Naive thymus-derived CD4-positive, alpha-beta T cell (primary cell): ENCODE measurements at regions of chr3 and their contacts with region 1.

Region 1: DNA sequence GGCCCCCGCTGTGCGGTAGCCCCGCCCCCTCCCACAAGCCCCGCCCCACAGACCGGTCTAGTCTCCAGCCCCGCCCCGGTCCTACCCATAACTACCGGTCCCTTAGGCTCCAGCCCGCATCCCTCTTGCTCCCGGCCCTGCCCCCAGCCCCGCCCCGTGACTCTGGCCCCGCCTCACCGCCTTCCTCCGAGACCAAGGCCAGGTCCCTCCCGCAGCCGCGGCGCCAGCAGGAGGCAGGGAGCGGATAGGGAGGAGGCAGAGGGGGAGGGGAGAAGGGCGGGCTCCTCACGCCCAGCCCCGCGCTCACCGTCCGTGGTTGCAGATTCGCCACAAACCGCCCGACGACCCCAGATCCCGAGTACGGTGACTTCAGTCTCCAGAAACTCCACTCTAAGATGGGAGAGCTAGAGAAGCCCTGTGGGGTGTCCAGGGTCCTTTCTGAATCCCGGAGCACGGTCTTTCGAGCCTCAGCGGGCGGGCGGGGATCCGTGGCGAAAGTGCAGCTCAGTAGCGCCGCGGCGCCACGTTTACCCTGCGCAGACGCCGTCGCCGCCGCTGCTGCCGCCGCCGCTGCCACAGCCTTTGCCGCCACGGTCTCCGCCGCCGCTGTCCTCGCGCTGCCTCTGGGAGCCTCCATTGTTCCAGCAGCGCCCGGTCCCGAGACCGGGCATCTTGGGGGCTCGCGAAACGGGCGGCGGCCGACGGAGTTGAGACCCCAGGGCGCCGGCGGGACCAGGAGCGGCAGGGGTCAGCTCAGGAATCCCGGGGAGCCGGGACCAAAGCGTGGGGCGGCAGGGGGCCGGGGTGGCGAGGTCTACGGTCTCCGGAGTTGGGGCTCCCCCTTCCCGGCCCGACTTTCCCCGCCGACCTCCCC is at the start of gene BRPF1:
- DNase-seq: peak; percentile 91 to 99 (median 98)
- ATAC-seq: peak; percentile 96
- H3K4me3 ChIP-seq: peak within 1 kb of the TSS; percentile 85
- H3K4me3 Mint-ChIP-seq: peak within 1 kb of the TSS; percentile 91 to 98 (median 93)
- H3K27ac ChIP-seq: peak within 1 kb of the TSS; percentile 88
- H3K27ac Mint-ChIP-seq: peak within 1 kb of the TSS; percentile 86 to 97 (median 95)
- H3K4me1 ChIP-seq: peaks cover 22 to 32% of the 10 kb centered on the region in 2 donors
- H3K4me1 Mint-ChIP-seq: peaks cover 49 to 77% (median 72%) of the 10 kb centered on the region in 7 donors
- H3K27me3 ChIP-seq: no peaks in the 10 kb centered on the region
- H3K27me3 Mint-ChIP-seq: no peaks in the 10 kb centered on the region
- total RNA-seq, gene BRPF1: 32.0 to 42.4 (median 39.5) TPM

Region 2: GRCh38 chr3:9396700-9397521 is 334.5 kb before region 1 on chr3:
- CTCF ChIA-PET with region 1: no interaction called
- POLR2A ChIA-PET with region 1: interaction called, 7 read pairs
- intact Hi-C with region 1: loop called (anchors 1 kb)
- DNase-seq: peak; percentile 98 to 100 (median 99)
- ATAC-seq: peak; percentile 82
- H3K4me3 ChIP-seq: peak overlapping the region; percentile 85
- H3K4me3 Mint-ChIP-seq: peak overlapping the region; percentile 89 to 100 (median 96)
- H3K27ac ChIP-seq: peak overlapping the region; percentile 82
- H3K27ac Mint-ChIP-seq: peak overlapping the region; percentile 90 to 100 (median 98)
- H3K4me1 ChIP-seq: peaks cover 46 to 55% of the 10 kb centered on the region in 2 donors
- H3K4me1 Mint-ChIP-seq: peaks cover 59 to 80% (median 75%) of the 10 kb centered on the region in 7 donors
- H3K27me3 ChIP-seq: no peaks in the 10 kb centered on the region
- H3K27me3 Mint-ChIP-seq: peaks cover 0 to 2% (median 0%) of the 10 kb centered on the region in 5 donors

Region 3: GRCh38 chr3:9718118-9718517 is 13.3 kb before region 1 on chr3:
- CTCF ChIA-PET with region 1: interaction called, 13 read pairs
- POLR2A ChIA-PET with region 1: interaction called, 5 read pairs
- intact Hi-C with region 1: loop called in 1 of 2 experiments (anchors 1 kb)
- DNase-seq: no peak
- ATAC-seq: no peak
- H3K4me3 ChIP-seq: no peak overlapping the region
- H3K4me3 Mint-ChIP-seq: peak overlapping the region in 1 of 10 donors; percentile 7
- H3K27ac ChIP-seq: no peak overlapping the region
- H3K27ac Mint-ChIP-seq: no peak overlapping the region
- H3K4me1 ChIP-seq: peaks cover 0 to 8% of the 10 kb centered on the region in 2 donors
- H3K4me1 Mint-ChIP-seq: peaks cover 0 to 18% (median 17%) of the 10 kb centered on the region in 7 donors
- H3K27me3 ChIP-seq: no peaks in the 10 kb centered on the region
- H3K27me3 Mint-ChIP-seq: peaks cover 0 to 19% (median 5%) of the 10 kb centered on the region in 5 donors

Region 4: GRCh38 chr3:9792405-9793160 is 61.1 kb after region 1 on chr3 and contains the starts of genes ARPC4 and TADA3:
- CTCF ChIA-PET with region 1: interaction called, 4 read pairs
- POLR2A ChIA-PET with region 1: interaction called, 15 read pairs
- intact Hi-C with region 1: loop called (anchors 1 kb)
- DNase-seq: peak; percentile 83 to 96 (median 93)
- ATAC-seq: peak; percentile 92
- H3K4me3 ChIP-seq: peak within 1 kb of the TSS; percentile 81
- H3K4me3 Mint-ChIP-seq: peak within 1 kb of the TSS; percentile 90 to 100 (median 98)
- H3K27ac ChIP-seq: peak within 1 kb of the TSS; percentile 98
- H3K27ac Mint-ChIP-seq: peak within 1 kb of the TSS; percentile 97 to 100 (median 99)
- H3K4me1 ChIP-seq: peaks cover 47% of the 10 kb centered on the region in 2 donors
- H3K4me1 Mint-ChIP-seq: peaks cover 45 to 75% (median 63%) of the 10 kb centered on the region in 7 donors
- H3K27me3 ChIP-seq: no peaks in the 10 kb centered on the region
- H3K27me3 Mint-ChIP-seq: no peaks in the 10 kb centered on the region
- total RNA-seq, gene ARPC4: 128 to 273 (median 129) TPM
- total RNA-seq, gene TADA3: 31.6 to 67.4 (median 36.8) TPM

Region 5: DNA sequence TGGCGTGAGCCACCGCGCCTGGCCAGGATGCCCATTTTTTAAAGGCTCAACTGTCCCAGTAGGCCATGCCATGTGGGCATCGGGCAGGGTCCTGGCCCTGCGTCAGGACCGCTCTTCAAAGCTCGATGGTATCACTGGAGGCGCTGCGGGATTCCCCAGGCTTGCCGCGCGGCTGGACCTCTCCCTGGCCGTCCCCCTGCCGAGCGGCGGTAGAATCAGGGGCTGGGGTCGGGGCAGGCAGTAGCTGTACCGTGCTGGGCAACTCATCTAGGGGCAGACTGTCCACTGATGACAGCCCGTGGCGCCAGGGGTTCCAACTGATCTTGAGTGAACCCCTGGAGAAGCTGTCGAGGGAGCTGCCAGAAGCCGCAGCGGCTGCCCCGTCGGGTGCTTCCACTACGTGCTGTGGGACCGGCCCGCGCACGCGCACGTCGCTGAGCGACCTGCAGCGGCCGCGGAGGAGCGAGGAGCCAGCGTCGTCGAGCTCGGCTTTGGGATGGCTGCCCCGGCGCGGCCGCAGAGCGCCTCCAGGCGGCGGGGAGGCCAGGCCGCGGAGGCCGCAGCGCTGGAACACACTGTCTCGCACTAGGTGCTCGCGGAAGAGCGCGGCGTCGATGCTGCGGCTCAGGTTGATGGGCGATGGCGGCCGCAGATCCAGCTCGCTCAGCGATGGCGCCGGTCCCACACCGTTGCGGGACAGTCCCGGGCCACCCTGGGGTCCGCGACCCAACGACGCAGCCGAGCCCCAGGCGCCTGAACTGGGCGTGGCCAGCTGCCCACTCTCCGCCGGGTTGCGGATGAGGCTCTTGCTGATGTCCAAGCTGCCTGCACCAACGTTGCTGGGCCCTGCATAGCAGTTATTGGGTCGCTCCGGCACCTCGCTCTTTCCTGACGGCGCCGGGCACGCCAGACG is 214.9 kb after region 1 on chr3:
- CTCF ChIA-PET with region 1: interaction called, 3 read pairs
- POLR2A ChIA-PET with region 1: no interaction called
- intact Hi-C with region 1: loop called (anchors 5 kb)
- DNase-seq: peak; percentile 70 to 88 (median 80)
- ATAC-seq: peak; percentile 94
- H3K4me3 ChIP-seq: peak overlapping the region; percentile 50
- H3K4me3 Mint-ChIP-seq: peak overlapping the region; percentile 42 to 85 (median 78)
- H3K27ac ChIP-seq: peak overlapping the region; percentile 74
- H3K27ac Mint-ChIP-seq: peak overlapping the region in 8 of 9 donors; percentile 56 to 91 (median 82)
- H3K4me1 ChIP-seq: peaks cover 7% of the 10 kb centered on the region in 2 donors
- H3K4me1 Mint-ChIP-seq: peaks cover 8 to 16% (median 11%) of the 10 kb centered on the region in 7 donors
- H3K27me3 ChIP-seq: no peaks in the 10 kb centered on the region
- H3K27me3 Mint-ChIP-seq: no peaks in the 10 kb centered on the region

Region 6: DNA sequence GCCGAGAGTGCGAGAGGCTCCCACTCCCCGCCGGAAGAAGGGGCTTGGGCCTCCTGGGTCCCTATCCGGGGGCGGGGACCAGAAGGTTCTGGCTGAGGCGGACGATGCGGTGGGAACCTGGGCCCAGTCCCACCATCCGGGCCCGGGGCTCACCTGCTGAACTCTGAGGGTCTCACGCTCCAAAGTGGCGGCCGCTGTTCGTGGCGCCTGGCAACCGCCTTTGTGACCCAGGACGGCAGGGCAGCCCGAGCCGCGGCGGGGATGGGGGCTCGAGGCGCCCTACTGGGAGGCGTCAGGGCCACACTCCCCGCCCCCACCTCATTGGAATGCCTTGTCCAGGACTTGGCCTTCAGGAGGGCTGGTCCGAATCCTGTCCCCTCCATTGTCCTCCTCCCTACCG is 376.6 kb after region 1 on chr3 and contains the start of gene FANCD2OS:
- CTCF ChIA-PET with region 1: no interaction called
- POLR2A ChIA-PET with region 1: no interaction called
- intact Hi-C with region 1: no loop called
- DNase-seq: no peak
- ATAC-seq: no peak
- H3K4me3 ChIP-seq: no peak within 1 kb of the TSS
- H3K4me3 Mint-ChIP-seq: no peak within 1 kb of the TSS
- H3K27ac ChIP-seq: no peak within 1 kb of the TSS
- H3K27ac Mint-ChIP-seq: no peak within 1 kb of the TSS
- H3K4me1 ChIP-seq: no peaks in the 10 kb centered on the region
- H3K4me1 Mint-ChIP-seq: no peaks in the 10 kb centered on the region
- H3K27me3 ChIP-seq: no peaks in the 10 kb centered on the region
- H3K27me3 Mint-ChIP-seq: no peaks in the 10 kb centered on the region
- total RNA-seq, gene FANCD2OS: not detected

Region 7: GRCh38 chr3:10242182-10243065 is 511.0 kb after region 1 on chr3:
- CTCF ChIA-PET with region 1: no interaction called
- POLR2A ChIA-PET with region 1: no interaction called
- intact Hi-C with region 1: loop called in 1 of 2 experiments (anchors 1 kb)
- DNase-seq: peak; percentile 20 to 93 (median 84)
- ATAC-seq: peak; percentile 98
- H3K4me3 ChIP-seq: peak overlapping the region; percentile 13
- H3K4me3 Mint-ChIP-seq: peak overlapping the region; percentile 75 to 82 (median 77)
- H3K27ac ChIP-seq: peak overlapping the region; percentile 71
- H3K27ac Mint-ChIP-seq: peak overlapping the region; percentile 86 to 96 (median 93)
- H3K4me1 ChIP-seq: peaks cover 33 to 43% of the 10 kb centered on the region in 2 donors
- H3K4me1 Mint-ChIP-seq: peaks cover 40 to 60% (median 54%) of the 10 kb centered on the region in 7 donors
- H3K27me3 ChIP-seq: no peaks in the 10 kb centered on the region
- H3K27me3 Mint-ChIP-seq: no peaks in the 10 kb centered on the region